Activated T-helper 2 cell treated with anti-CD3 and anti-CD28 coated beads, Interferon-gamma antibody, Interleukin-2, Interleukin-4, amounts not matched to agents 10 μg/mL and 5 μg/mL and 100 μg/mL, durations not matched to agents 14 hours and 24 hours and 36 hours (primary cell): ENCODE measurements at regions of chr3 and their contacts with region 1.

Region 1: GRCh38 chr3:122258757-122259371 is 66.2 kb upstream of the CSTA start:
- DNase-seq: peak; percentile 56
- H3K4me3 Mint-ChIP-seq: no peak overlapping the region
- H3K27ac Mint-ChIP-seq: no peak overlapping the region
- H3K4me1 Mint-ChIP-seq: peaks cover 18% of the 10 kb centered on the region
- H3K27me3 Mint-ChIP-seq: peaks cover 8% of the 10 kb centered on the region

Region 2: DNA sequence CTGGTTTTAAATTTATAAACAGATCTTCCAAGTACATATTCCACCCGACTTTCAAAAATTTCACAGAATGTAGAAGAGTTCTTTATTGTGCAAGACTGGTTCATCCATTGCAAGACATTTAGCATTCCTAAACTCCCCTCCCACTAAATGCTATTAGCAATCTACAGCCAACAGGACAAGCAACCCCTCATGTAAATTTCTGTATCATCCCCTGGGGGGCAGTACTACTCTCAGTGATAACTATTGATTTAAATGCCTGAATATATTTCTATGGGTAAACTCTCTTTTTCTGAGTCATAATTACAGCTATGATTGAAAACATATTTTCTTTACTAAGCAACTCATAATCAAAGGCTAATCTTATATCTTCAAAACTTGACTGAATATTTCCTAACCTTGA is 375.4 kb before region 1 on chr3:
- intact Hi-C with region 1: loop called (anchors 2 kb)
- DNase-seq: no peak
- H3K4me3 Mint-ChIP-seq: no peak overlapping the region
- H3K27ac Mint-ChIP-seq: no peak overlapping the region
- H3K4me1 Mint-ChIP-seq: peaks cover 4% of the 10 kb centered on the region
- H3K27me3 Mint-ChIP-seq: no peaks in the 10 kb centered on the region

Region 3: DNA sequence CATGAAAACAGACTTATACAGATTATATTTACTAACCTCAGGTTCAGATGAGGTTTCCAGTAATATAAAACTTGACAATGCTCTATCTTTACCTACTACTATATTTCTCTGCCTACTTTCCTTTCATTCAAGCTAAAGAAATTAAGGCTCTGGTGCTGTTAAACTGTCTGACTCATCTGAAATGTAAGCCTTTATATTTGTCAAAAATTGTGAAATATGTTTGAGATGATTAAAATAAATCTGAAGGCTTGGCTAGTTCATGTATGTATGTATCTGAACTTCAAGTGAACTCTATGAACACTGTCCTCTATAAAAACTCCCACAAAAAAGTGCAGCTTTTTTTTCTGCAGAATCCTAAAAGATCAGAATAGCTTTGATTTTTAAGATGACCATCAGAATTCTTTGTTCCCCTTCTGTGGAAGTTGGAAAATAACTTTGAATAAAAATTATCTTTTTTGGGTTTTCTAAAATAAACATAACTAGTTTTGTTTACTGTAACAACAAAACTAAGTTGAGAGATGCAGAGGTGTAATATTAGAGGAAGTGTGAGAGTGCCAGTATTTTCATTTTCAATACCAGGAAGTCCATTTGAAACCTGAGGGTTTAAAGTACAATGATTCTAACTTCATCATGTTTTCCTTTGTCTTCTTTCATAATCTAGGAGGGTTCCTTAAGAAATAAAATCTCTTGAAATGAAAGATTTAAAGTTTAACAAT is 279.0 kb before region 1 on chr3:
- intact Hi-C with region 1: loop called (anchors 5 kb)
- DNase-seq: no peak
- H3K4me3 Mint-ChIP-seq: no peak overlapping the region
- H3K27ac Mint-ChIP-seq: no peak overlapping the region
- H3K4me1 Mint-ChIP-seq: peaks cover 23% of the 10 kb centered on the region
- H3K27me3 Mint-ChIP-seq: no peaks in the 10 kb centered on the region

Region 4: GRCh38 chr3:122101646-122102045 is 157.2 kb before region 1 on chr3:
- intact Hi-C with region 1: loop called (anchors 1 kb)
- DNase-seq: no peak
- H3K4me3 Mint-ChIP-seq: no peak overlapping the region
- H3K27ac Mint-ChIP-seq: peak overlapping the region; percentile 62
- H3K4me1 Mint-ChIP-seq: peaks cover 38% of the 10 kb centered on the region
- H3K27me3 Mint-ChIP-seq: no peaks in the 10 kb centered on the region

Region 5: GRCh38 chr3:122146466-122146865 is 112.4 kb before region 1 on chr3:
- intact Hi-C with region 1: loop called (anchors 2 kb)
- DNase-seq: peak; percentile 56
- H3K4me3 Mint-ChIP-seq: no peak overlapping the region
- H3K27ac Mint-ChIP-seq: peak overlapping the region; percentile 46
- H3K4me1 Mint-ChIP-seq: peaks cover 31% of the 10 kb centered on the region
- H3K27me3 Mint-ChIP-seq: no peaks in the 10 kb centered on the region

Region 6: GRCh38 chr3:122245513-122246174 is 13.2 kb before region 1 on chr3:
- intact Hi-C with region 1: loop called (anchors 1 kb)
- DNase-seq: no peak
- H3K4me3 Mint-ChIP-seq: peak overlapping the region; percentile 62
- H3K27ac Mint-ChIP-seq: peak overlapping the region; percentile 42
- H3K4me1 Mint-ChIP-seq: peaks cover 16% of the 10 kb centered on the region
- H3K27me3 Mint-ChIP-seq: peaks cover 34% of the 10 kb centered on the region

Region 7: DNA sequence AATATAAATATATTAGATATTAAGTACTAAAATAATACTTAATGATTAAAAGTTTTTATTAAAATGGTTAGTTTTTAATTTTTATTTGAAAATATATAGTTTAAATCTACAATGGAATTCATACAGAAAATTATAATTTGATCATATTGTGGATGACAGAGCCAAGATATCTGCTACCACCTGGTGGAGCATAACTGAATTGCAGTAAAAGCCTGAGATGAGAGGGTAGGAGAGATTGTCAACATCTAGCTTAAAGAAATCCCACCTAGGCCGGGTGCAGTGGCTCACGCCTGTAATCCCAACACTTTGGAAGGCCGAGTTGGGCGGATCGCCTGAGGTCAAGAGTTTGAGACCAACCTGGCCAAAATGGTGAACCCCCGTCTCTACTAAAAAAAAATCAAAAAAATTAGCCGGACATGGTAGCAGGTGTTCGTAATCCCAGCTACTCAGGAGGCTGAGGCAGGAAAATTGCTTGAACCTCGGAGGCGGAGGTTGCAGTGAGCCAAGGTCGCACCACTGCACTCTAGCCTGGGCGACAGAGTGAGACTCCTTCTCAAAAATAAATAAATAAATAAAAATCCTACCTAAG is 41.1 kb after region 1 on chr3:
- intact Hi-C with region 1: loop called (anchors 2 kb)
- DNase-seq: no peak
- H3K4me3 Mint-ChIP-seq: no peak overlapping the region
- H3K27ac Mint-ChIP-seq: no peak overlapping the region
- H3K4me1 Mint-ChIP-seq: peaks cover 24% of the 10 kb centered on the region
- H3K27me3 Mint-ChIP-seq: peaks cover 1% of the 10 kb centered on the region

Region 8: DNA sequence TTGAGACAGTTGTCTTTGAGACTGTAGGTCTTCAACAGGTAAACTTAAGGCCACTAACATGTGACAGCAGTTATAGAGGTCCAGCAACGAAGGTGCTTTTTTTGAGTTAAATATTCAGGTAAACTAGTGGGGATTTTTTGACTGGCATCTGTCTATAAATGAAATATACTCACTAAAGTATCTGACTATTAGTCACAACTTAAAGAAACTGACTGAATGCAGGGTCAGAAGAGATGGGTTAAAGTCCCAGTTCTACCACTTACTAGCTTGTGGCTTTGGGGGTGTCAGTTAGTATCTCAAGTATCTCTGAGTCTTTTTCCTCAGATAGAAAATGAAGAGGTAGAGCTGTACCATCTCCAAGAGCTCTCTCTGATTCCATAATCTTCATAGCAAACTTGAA is 106.2 kb after region 1 on chr3:
- intact Hi-C with region 1: no loop called
- DNase-seq: no peak
- H3K4me3 Mint-ChIP-seq: peak overlapping the region; percentile 14
- H3K27ac Mint-ChIP-seq: peak overlapping the region; percentile 92
- H3K4me1 Mint-ChIP-seq: peaks cover 41% of the 10 kb centered on the region
- H3K27me3 Mint-ChIP-seq: no peaks in the 10 kb centered on the region

Region 9: GRCh38 chr3:122415104-122415719 is 156.3 kb after region 1 on chr3:
- intact Hi-C with region 1: no loop called
- DNase-seq: peak; percentile 51
- H3K4me3 Mint-ChIP-seq: peak overlapping the region; percentile 93
- H3K27ac Mint-ChIP-seq: peak overlapping the region; percentile 95
- H3K4me1 Mint-ChIP-seq: peaks cover 24% of the 10 kb centered on the region
- H3K27me3 Mint-ChIP-seq: no peaks in the 10 kb centered on the region